Activated CD4-positive, alpha-beta memory T cell treated with anti-CD3 and anti-CD28 coated beads for 36 hours (primary cell): ENCODE measurements at regions of chr19 and their contacts with region 1.

Region 1: DNA sequence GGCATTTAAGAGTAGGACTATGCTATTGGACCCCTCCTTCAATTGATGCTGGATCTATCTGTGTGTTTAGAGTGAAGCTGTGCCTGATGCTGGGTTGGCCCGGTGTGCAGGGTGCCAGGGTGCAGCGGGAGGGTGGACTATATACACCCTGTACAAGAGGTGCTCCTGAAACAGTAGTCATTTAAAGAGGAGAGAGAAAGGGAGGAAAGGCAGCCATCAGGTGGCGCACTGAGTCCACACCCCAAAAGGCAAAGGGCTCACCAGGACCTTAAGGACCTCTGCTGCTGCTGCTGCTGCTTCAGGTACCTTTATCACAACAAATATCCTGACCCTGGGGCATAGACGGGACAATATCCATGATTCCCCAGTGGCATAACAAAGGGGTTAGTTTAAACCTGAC is 39.4 kb downstream of the ZNF136 start:
- DNase-seq: peak; percentile 78
- H3K4me3 Mint-ChIP-seq: no peak overlapping the region
- H3K27ac Mint-ChIP-seq: no peak overlapping the region
- H3K4me1 Mint-ChIP-seq: peaks cover 5% of the 10 kb centered on the region
- H3K27me3 Mint-ChIP-seq: no peaks in the 10 kb centered on the region

Region 2: GRCh38 chr19:12092065-12092867 is 110.0 kb before region 1 on chr19:
- CTCF ChIA-PET with region 1: no interaction called
- POLR2A ChIA-PET with region 1: no interaction called
- intact Hi-C with region 1: no loop called
- DNase-seq: peak; percentile 84
- H3K4me3 Mint-ChIP-seq: peak overlapping the region; percentile 80
- H3K27ac Mint-ChIP-seq: no peak overlapping the region
- H3K4me1 Mint-ChIP-seq: peaks cover 11% of the 10 kb centered on the region
- H3K27me3 Mint-ChIP-seq: peaks cover 14% of the 10 kb centered on the region

Region 3: GRCh38 chr19:12346896-12347295 is 144.6 kb after region 1 on chr19:
- CTCF ChIA-PET with region 1: interaction called, 4 read pairs
- POLR2A ChIA-PET with region 1: no interaction called
- intact Hi-C with region 1: loop called (anchors 1 kb)
- DNase-seq: peak; percentile 16
- H3K4me3 Mint-ChIP-seq: no peak overlapping the region
- H3K27ac Mint-ChIP-seq: no peak overlapping the region
- H3K4me1 Mint-ChIP-seq: no peaks in the 10 kb centered on the region
- H3K27me3 Mint-ChIP-seq: no peaks in the 10 kb centered on the region

Region 4: DNA sequence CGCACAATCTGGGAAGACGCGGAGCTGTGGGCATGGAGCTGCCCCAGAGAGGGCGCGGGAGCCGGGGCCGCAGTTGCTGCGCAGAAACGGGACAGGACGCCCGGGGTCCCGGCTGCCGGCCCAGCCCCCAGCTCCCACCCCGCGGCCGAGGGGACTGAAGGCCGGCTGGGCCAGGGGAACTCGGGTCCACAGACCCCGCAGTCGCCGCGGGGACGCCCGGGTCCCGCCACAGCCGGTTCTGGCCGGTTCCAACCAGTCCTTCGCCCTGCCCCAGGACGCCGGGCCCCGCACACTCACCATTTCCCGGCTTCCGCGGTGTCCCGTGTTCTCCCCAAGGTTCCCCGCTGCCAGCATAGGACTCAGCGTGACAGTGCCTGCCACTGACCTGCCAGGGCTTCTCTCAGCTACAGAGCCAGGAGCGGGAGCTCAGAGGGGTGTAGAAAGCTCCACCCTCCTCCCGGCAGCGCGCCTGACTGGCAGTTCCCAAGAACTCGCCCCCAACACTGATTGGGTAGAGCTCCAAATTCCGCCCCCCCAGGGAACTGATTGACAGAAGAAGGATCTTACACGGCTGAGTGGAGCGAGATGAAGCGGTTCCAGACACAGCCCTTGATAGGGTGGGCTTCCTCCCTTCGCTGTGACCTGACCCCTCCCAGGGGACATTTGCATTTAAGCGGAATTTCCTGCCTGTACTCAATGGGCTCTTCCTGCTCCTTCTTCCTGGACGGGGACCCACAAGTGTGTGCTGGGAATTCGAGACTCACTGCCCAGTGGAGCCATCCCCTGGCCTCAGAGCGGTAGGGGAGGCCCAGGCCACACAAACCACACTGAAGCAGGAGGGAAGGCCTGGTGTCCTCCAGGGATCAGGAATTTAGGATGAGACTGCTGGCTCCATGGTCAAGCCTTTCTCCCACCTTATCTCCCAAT is 163.2 kb after region 1 on chr19 and contains the start of gene ZNF442:
- CTCF ChIA-PET with region 1: no interaction called
- POLR2A ChIA-PET with region 1: no interaction called
- intact Hi-C with region 1: loop called (anchors 1 kb)
- DNase-seq: peak; percentile 93
- H3K4me3 Mint-ChIP-seq: peak within 1 kb of the TSS; percentile 93
- H3K27ac Mint-ChIP-seq: peak within 1 kb of the TSS; percentile 65
- H3K4me1 Mint-ChIP-seq: peaks cover 16% of the 10 kb centered on the region
- H3K27me3 Mint-ChIP-seq: peaks cover 2% of the 10 kb centered on the region
- total RNA-seq, gene ZNF442: 2.3 TPM